Sigmoid colon (tissue), 7 donors: ENCODE measurements at regions of chr6 and their contacts with region 1.

Region 1: DNA sequence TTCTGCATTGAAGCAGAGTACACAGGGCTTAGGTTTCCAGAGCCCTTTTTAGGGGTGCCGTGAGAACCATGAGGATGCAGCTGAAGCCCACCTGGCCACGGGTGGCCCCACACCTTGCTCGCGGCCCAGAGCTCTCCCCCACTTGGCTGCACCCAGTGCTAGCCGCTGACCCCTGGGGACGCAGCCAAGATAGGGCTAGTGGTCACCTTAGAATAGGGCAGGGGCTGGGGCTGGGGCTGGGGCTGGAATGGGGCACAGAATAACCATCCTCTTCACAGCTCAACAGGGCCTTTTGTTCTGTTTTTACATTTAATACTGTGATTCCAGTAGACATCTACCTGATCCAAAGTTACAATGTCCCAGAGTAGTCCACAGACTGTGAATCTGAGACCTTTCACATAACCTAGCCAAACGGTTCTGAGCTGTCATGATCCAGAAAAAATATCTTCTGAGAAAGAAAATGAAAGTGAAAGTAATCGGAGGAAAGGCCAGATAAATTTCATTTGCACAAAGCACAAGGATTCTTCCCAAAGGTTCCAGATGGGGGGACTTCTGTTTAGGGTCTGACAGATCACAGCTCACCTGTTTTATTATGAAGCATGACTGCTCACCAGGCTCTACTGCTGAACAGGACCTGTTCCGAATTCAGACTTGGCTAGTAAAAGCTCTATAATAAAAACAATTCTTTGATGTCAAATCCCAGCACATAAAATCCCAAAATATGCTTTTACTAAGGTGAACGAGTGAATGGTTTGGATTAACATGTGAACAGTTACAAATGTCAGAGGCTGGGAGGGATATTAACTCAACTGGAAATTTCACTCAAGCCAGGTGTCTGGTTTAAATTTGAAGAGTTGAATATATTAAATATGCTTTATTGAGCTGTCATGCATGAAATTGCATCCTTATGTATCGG is 401.9 kb downstream of the THBS2 start:
- DNase-seq: no peak
- H3K4me3 ChIP-seq: peak overlapping the region; percentile 12 to 33 (median 27)
- H3K27ac ChIP-seq: peak overlapping the region in 1 of 4 donors; percentile 32
- H3K4me1 ChIP-seq: peaks cover 0 to 14% (median 6%) of the 10 kb centered on the region in 4 donors
- H3K27me3 ChIP-seq: no peaks in the 10 kb centered on the region
- CTCF ChIP-seq: no peak
- EP300 ChIP-seq: no peak
- POLR2A ChIP-seq: no peak

Region 2: GRCh38 chr6:168666699-168667425 is 184.9 kb before region 1 on chr6:
- intact Hi-C with region 1: loop called (anchors 10 kb)
- DNase-seq: no peak
- H3K4me3 ChIP-seq: no peak overlapping the region
- H3K27ac ChIP-seq: no peak overlapping the region
- H3K4me1 ChIP-seq: no peaks in the 10 kb centered on the region
- H3K27me3 ChIP-seq: no peaks in the 10 kb centered on the region
- CTCF ChIP-seq: no peak
- EP300 ChIP-seq: no peak
- POLR2A ChIP-seq: no peak

Region 3: DNA sequence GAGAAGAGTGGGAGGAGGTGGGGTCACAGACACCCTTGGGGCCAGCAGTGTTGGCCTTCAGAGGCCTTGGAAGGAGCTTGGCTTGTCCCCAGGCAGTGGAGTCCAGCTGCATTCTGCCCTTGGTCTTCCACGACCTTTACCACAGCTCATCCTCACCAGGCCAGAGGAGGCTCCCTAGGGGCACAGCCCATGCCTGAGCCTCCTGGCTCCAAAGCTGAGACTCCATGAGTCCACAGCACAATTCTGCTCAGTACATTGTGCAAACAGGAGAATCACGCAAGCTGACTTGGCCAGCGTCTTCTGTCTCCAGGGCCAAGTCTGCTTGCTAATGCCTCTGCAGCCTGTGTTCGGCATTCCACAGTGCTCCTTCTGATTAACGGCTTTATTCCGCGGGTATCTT is 73.5 kb before region 1 on chr6:
- intact Hi-C with region 1: no loop called
- DNase-seq: peak; percentile 80
- H3K4me3 ChIP-seq: no peak overlapping the region
- H3K27ac ChIP-seq: no peak overlapping the region
- H3K4me1 ChIP-seq: peaks cover 0 to 14% (median 11%) of the 10 kb centered on the region in 4 donors
- H3K27me3 ChIP-seq: no peaks in the 10 kb centered on the region
- CTCF ChIP-seq: no peak
- EP300 ChIP-seq: no peak
- POLR2A ChIP-seq: no peak